Activated B cell treated with CpG ODN at 0.5 μM for 24 hours (primary cell): ENCODE measurements at regions of chr3 and their contacts with region 1.

Region 1: DNA sequence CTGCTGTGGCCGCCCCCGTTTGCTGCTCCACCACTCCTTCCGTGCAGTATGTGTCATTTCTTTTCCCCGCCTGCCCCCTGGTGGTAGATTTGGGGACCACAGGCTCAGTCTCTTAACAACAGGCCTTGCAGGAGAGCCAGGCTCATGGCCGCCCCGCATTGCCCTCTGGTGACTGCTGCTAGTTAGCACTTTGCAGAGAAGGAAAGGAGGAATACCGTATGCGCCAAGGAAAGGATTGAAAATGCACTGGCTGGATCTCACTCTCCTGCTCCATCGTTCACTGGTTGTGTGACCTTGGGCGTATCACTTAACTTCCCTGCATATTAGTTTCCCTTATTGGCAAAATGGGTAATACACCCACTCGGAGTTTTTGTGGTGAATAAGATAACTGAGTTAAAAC is 39.3 kb upstream of the PXYLP1 start:
- DNase-seq: peak; percentile 85
- ATAC-seq: peak; percentile 100
- H3K4me3 Mint-ChIP-seq: no peak overlapping the region
- H3K27ac Mint-ChIP-seq: no peak overlapping the region
- H3K4me1 Mint-ChIP-seq: peaks cover 6% of the 10 kb centered on the region
- H3K27me3 Mint-ChIP-seq: peaks cover 23% of the 10 kb centered on the region
- CTCF ChIP-seq: no peak

Region 2: DNA sequence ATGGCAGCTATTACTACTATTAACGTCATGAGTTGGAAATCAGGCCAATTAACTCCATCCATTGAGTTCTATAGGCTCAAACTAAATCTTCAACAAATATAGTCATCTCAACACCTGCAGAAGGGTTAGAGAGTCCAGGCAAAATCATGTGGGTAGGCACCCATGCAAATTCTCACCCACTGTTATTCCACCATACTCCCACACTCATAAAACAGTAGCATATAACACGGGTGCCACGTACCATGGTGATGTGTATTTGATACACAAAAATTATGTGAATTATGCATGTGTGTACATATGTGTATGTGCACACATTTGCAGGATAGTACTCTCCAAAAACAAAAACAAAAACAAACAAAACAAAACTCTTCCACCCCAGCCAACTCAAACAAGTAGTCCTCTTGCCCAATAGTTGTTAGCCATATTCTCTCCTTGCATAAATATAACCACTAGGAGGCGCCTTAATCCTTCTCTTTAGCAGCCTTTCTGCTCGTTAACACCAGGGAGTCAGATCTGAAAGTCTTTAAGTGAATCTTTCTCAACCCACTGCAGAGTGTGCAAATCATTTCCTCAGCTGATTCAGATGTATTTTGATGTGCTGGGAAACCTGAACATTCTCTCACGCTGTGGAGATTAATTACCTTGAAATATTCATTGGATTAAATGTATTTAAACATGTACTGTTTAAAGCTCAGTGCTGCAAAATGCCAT is 1764.9 kb before region 1 on chr3:
- CTCF ChIA-PET with region 1: no interaction called
- POLR2A ChIA-PET with region 1: no interaction called
- intact Hi-C with region 1: loop called (anchors 2 kb)
- DNase-seq: no peak
- ATAC-seq: peak; percentile 42
- H3K4me3 Mint-ChIP-seq: no peak overlapping the region
- H3K27ac Mint-ChIP-seq: no peak overlapping the region
- H3K4me1 Mint-ChIP-seq: no peaks in the 10 kb centered on the region
- H3K27me3 Mint-ChIP-seq: no peaks in the 10 kb centered on the region
- CTCF ChIP-seq: no peak

Region 3: GRCh38 chr3:140863580-140864009 is 328.8 kb before region 1 on chr3:
- CTCF ChIA-PET with region 1: no interaction called
- POLR2A ChIA-PET with region 1: no interaction called
- intact Hi-C with region 1: loop called (anchors 1 kb)
- DNase-seq: peak; percentile 17
- ATAC-seq: no peak
- H3K4me3 Mint-ChIP-seq: no peak overlapping the region
- H3K27ac Mint-ChIP-seq: no peak overlapping the region
- H3K4me1 Mint-ChIP-seq: peaks cover 3% of the 10 kb centered on the region
- H3K27me3 Mint-ChIP-seq: no peaks in the 10 kb centered on the region
- CTCF ChIP-seq: no peak

Region 4: GRCh38 chr3:140922634-140923033 is 269.7 kb before region 1 on chr3:
- CTCF ChIA-PET with region 1: interaction called, 3 read pairs
- POLR2A ChIA-PET with region 1: no interaction called
- intact Hi-C with region 1: loop called (anchors 1 kb)
- DNase-seq: no peak
- ATAC-seq: peak; percentile 34
- H3K4me3 Mint-ChIP-seq: no peak overlapping the region
- H3K27ac Mint-ChIP-seq: no peak overlapping the region
- H3K4me1 Mint-ChIP-seq: no peaks in the 10 kb centered on the region
- H3K27me3 Mint-ChIP-seq: peaks cover 20% of the 10 kb centered on the region
- CTCF ChIP-seq: no peak

Region 5: DNA sequence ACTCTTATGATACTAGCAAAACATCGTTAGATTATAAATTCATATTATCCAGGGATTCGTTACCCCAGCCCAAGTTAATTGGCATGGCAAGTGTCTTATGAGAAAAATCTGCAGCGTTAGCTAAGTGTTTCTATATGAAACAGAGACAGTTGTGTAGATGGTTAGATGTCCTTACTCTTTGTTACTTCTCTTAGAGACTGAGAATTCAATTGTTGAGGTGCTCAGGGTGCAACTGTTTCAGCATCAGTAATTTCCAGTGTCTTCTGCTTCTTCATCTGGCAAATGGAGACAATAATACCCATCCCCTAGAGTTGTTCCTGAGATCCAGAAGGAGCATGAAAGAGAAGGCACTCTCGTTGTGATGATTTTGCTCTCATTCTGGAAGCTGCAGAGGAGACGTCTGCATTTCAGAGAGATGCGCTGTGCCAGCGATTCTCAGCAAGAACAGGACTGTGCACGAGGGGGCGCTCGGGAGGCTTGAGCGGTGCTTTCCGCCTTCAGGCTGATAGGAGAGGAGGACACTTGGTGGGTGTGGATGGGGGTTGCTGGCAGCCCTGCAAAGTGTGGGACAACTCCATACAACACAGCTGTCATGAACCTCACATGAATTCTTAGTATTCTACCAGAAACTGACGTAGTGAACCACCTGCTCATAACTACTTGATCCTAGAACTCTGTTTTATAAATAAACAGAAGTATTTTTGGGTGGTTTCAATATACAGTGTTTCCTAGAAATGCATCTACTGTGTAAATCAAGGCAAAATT is 180.9 kb before region 1 on chr3:
- CTCF ChIA-PET with region 1: no interaction called
- POLR2A ChIA-PET with region 1: no interaction called
- intact Hi-C with region 1: loop called (anchors 1 kb)
- DNase-seq: peak; percentile 41
- ATAC-seq: peak; percentile 66
- H3K4me3 Mint-ChIP-seq: no peak overlapping the region
- H3K27ac Mint-ChIP-seq: no peak overlapping the region
- H3K4me1 Mint-ChIP-seq: peaks cover 5% of the 10 kb centered on the region
- H3K27me3 Mint-ChIP-seq: peaks cover 29% of the 10 kb centered on the region
- CTCF ChIP-seq: peak; percentile 48